ENCODE measurements at regions of chr18 and their contacts with region 1.

Region 1: GRCh38 chr18:839224-840022 is 27.4 kb upstream of the YES1 start:
- DNase-seq: peak; percentile 94
- ATAC-seq: peak; percentile 99
- H3K4me3 Mint-ChIP-seq: no peak overlapping the region
- H3K27ac Mint-ChIP-seq: no peak overlapping the region
- H3K4me1 Mint-ChIP-seq: no peaks in the 10 kb centered on the region
- H3K27me3 Mint-ChIP-seq: peaks cover 5% of the 10 kb centered on the region

Region 2: GRCh38 chr18:623761-624620 is 215.4 kb before region 1 on chr18:
- CTCF ChIA-PET with region 1: interaction called, 57 read pairs
- POLR2A ChIA-PET with region 1: no interaction called
- intact Hi-C with region 1: loop called (anchors 1 to 2 kb)
- DNase-seq: peak; percentile 81
- ATAC-seq: peak; percentile 83
- H3K4me3 Mint-ChIP-seq: no peak overlapping the region
- H3K27ac Mint-ChIP-seq: peak overlapping the region; percentile 10
- H3K4me1 Mint-ChIP-seq: no peaks in the 10 kb centered on the region
- H3K27me3 Mint-ChIP-seq: peaks cover 2% of the 10 kb centered on the region

Region 3: GRCh38 chr18:712401-713134 is 126.9 kb before region 1 on chr18 and contains the start of gene ENOSF1:
- CTCF ChIA-PET with region 1: interaction called, 17 read pairs
- POLR2A ChIA-PET with region 1: no interaction called
- intact Hi-C with region 1: loop called in 1 of 2 experiments (anchors 1 kb)
- DNase-seq: peak; percentile 95
- ATAC-seq: peak; percentile 91
- H3K4me3 Mint-ChIP-seq: peak within 1 kb of the TSS; percentile 94
- H3K27ac Mint-ChIP-seq: peak within 1 kb of the TSS; percentile 99
- H3K4me1 Mint-ChIP-seq: peaks cover 53% of the 10 kb centered on the region
- H3K27me3 Mint-ChIP-seq: no peaks in the 10 kb centered on the region
- total RNA-seq, gene ENOSF1: 92.6 to 97.4 TPM

Region 4: GRCh38 chr18:741931-742512 is 97.4 kb before region 1 on chr18:
- CTCF ChIA-PET with region 1: interaction called, 155 read pairs
- POLR2A ChIA-PET with region 1: interaction called, 3 read pairs
- intact Hi-C with region 1: loop called (anchors 1 kb)
- DNase-seq: no peak
- ATAC-seq: peak; percentile 68
- H3K4me3 Mint-ChIP-seq: no peak overlapping the region
- H3K27ac Mint-ChIP-seq: no peak overlapping the region
- H3K4me1 Mint-ChIP-seq: no peaks in the 10 kb centered on the region
- H3K27me3 Mint-ChIP-seq: no peaks in the 10 kb centered on the region

Region 5: GRCh38 chr18:903701-904100 is 64.3 kb after region 1 on chr18:
- CTCF ChIA-PET with region 1: no interaction called
- POLR2A ChIA-PET with region 1: no interaction called
- intact Hi-C with region 1: no loop called
- DNase-seq: peak; percentile 79
- ATAC-seq: no peak
- H3K4me3 Mint-ChIP-seq: no peak overlapping the region
- H3K27ac Mint-ChIP-seq: no peak overlapping the region
- H3K4me1 Mint-ChIP-seq: peaks cover 18% of the 10 kb centered on the region
- H3K27me3 Mint-ChIP-seq: peaks cover 60% of the 10 kb centered on the region

Region 6: GRCh38 chr18:1062588-1062987 is 223.2 kb after region 1 on chr18:
- CTCF ChIA-PET with region 1: no interaction called
- POLR2A ChIA-PET with region 1: no interaction called
- intact Hi-C with region 1: no loop called
- DNase-seq: no peak
- ATAC-seq: no peak
- H3K4me3 Mint-ChIP-seq: no peak overlapping the region
- H3K27ac Mint-ChIP-seq: no peak overlapping the region
- H3K4me1 Mint-ChIP-seq: no peaks in the 10 kb centered on the region
- H3K27me3 Mint-ChIP-seq: no peaks in the 10 kb centered on the region

Measured in activated CD4-positive, alpha-beta T cell treated with anti-CD3 and anti-CD28 coated beads for 36 hours (primary cell).